ENCODE measurements at regions of chr12 and their contacts with region 1.

Region 1: GRCh38 chr12:13255792-13256691 is 59.5 kb downstream of the EMP1 start:
- DNase-seq: peak; percentile 38
- H3K4me3 ChIP-seq: peak overlapping the region; percentile 52
- CTCF ChIP-seq: peak; percentile 100

Region 2: GRCh38 chr12:13233830-13234641 is 22.0 kb before region 1 on chr12:
- CTCF ChIA-PET with region 1: interaction called, 13 read pairs
- POLR2A ChIA-PET with region 1: no interaction called
- DNase-seq: no peak
- H3K4me3 ChIP-seq: no peak overlapping the region
- CTCF ChIP-seq: peak; percentile 80

Region 3: GRCh38 chr12:13270817-13271216 is 14.8 kb after region 1 on chr12:
- CTCF ChIA-PET with region 1: interaction called, 40 read pairs
- POLR2A ChIA-PET with region 1: no interaction called
- DNase-seq: no peak
- H3K4me3 ChIP-seq: no peak overlapping the region
- CTCF ChIP-seq: no peak

Region 4: DNA sequence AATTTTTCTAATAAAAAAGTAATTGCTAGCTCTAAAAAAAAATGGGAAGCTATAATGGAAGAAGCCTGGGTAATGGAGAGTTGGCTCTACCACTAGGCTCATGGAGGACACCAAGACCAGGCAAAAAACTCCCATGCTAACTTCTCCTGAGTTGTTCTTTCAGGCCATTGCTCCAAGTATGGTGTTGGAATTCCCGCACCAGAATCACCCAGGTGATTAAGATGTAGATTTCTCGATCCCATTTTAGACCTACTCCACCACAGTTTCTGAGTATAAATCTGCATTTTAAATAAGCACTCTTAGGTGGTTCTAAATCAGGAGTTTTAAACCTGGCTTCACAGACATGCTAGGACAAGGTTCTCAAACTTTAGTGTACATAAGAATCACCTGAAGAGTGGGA is 161.5 kb after region 1 on chr12:
- CTCF ChIA-PET with region 1: no interaction called
- POLR2A ChIA-PET with region 1: no interaction called
- DNase-seq: no peak
- H3K4me3 ChIP-seq: no peak overlapping the region
- CTCF ChIP-seq: no peak

Region 5: GRCh38 chr12:13534645-13535398 is 278.8 kb after region 1 on chr12:
- CTCF ChIA-PET with region 1: interaction called, 53 read pairs
- POLR2A ChIA-PET with region 1: no interaction called
- DNase-seq: no peak
- H3K4me3 ChIP-seq: 0 out of 2 replicates have a peak overlapping the region, but pooled peaks have one; percentile 26
- CTCF ChIP-seq: peak; percentile 92

Region 6: GRCh38 chr12:14167005-14167628 is 911.1 kb after region 1 on chr12:
- CTCF ChIA-PET with region 1: interaction called, 24 read pairs
- POLR2A ChIA-PET with region 1: no interaction called
- DNase-seq: no peak
- H3K4me3 ChIP-seq: no peak overlapping the region
- CTCF ChIP-seq: peak; percentile 79